ENCODE measurements at regions of chr6 and their contacts with region 1.

Region 1: DNA sequence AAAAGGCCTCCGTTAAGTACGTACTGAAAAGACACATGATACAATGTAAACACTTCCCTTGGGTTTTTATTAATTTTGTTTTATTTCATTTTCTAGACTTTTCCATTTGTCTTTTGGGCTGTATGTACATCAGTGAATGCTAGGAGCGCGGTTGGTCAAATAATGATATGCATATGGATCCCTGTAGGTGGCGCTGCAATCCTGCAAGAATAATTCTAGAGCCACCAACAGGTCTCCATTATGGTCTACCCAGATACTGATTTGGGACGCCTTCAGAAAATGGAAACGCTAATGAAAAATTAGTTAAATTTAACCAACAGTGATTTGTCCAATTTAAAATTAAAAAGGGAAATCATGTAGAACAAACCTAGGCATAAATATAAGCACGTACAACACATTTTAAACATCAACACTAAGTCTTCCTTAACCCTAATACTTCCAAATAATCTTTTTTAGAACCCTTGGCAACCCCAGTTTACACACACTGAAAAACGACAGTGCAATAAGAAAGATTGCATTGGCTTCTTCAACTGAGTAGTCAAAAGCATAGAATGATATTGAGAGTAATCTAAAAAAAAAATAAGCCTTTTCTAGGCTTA is 433.5 kb downstream of the RFPL4B start:
- DNase-seq: peak; percentile 44 to 55
- H3K4me3 ChIP-seq: no peak overlapping the region
- H3K27ac ChIP-seq: no peak overlapping the region
- H3K4me1 ChIP-seq: no peaks in the 10 kb centered on the region
- H3K27me3 ChIP-seq: no peaks in the 10 kb centered on the region
- CTCF ChIP-seq: peak; percentile 82

Region 2: DNA sequence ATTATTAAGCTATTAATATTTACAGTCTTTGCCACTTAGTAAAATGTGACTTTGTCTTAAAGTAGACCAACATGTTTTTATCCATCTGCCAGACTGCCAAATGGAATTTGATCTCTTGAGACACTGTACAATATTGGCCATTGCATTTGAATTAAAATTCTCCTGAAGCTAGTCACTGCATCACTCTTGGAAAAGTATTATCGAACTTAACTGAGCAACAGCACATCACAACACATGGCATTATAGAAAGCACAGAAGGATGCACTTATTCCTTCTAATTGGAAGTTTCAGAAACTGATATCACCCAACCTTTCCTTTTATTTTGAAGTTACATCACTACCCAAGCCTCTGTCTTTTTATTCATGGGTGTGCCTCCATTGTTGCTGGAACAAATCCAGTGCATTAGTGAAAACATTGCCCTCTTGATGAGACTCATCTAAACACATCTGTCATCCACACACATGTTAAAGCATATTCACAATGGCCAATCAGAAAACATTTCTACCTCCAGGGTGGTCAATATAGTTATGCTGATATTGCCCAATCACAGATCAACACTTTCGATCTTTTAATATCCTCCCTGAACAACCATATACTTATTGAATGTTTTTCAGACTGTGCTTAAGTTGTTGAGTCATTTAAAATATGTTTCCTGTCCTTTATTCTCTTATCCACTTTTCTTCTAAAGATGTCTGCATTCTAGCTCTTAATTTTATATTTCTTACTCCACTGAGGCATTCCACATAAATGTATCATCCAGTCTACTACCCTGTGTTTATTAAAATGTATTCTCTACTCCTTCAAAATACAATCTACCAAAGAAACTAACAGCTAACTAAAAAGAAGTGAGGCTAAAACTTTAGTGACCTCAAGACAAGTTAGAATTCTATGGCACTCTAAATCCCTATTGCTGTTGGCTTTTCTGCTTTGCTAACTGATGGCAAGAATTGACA is 101.5 kb after region 1 on chr6:
- CTCF ChIA-PET with region 1: no interaction called
- POLR2A ChIA-PET with region 1: no interaction called
- intact Hi-C with region 1: no loop called
- DNase-seq: no peak
- H3K4me3 ChIP-seq: no peak overlapping the region
- H3K27ac ChIP-seq: no peak overlapping the region
- H3K4me1 ChIP-seq: no peaks in the 10 kb centered on the region
- H3K27me3 ChIP-seq: no peaks in the 10 kb centered on the region
- CTCF ChIP-seq: no peak

Region 3: DNA sequence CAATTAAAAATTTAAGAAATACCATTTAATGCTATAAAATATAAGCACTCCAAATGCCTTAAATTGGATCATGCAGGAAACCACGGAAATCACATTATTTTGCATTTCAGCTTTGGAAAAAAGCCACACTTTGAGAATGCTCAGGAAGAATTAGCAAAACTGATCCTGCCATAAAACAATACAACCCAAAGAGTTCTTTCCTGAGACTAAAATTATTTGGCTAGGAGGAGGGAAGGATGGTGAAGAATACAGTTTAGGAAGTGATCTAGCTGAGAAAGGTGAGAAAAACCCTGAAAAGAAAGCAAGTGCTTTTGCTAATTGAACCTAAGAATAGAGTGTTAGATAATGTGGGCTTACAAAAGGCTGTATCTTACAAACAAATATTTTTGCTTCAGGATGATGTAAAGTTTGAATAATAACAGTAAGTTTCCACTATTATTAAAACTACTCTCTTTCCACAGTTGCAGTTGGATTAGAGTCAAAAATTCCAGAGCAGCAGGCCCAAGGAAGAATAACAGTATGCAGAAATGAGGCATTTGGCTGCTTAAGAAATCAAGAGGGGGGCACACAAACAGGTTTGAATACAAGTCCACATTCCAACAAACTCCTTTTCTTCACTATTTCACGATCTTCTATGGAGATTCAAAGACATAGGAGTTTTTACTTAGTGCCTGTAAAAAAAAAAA is 132.0 kb after region 1 on chr6:
- CTCF ChIA-PET with region 1: no interaction called
- POLR2A ChIA-PET with region 1: no interaction called
- intact Hi-C with region 1: no loop called
- DNase-seq: no peak
- H3K4me3 ChIP-seq: no peak overlapping the region
- H3K27ac ChIP-seq: no peak overlapping the region
- H3K4me1 ChIP-seq: peaks cover 9% of the 10 kb centered on the region
- H3K27me3 ChIP-seq: no peaks in the 10 kb centered on the region
- CTCF ChIP-seq: no peak

Region 4: DNA sequence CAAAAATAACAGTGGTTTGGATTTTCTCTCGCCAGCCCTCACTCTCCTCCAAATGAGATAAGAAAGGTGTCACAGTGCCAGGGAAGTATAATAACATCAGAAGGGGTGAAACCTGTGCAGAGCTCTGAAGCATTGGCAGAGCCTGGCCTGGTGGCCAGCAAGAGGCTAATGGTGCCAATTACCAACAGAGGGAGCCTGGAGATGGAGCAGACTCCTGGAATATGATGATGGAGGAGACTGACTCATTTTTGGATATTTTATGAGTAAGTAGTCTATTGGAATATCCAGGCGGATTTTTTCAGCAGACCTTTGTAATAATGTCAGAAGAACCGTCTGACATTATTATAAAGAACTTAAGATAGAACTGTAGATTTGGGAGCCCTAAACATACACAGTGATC is 633.9 kb after region 1 on chr6:
- CTCF ChIA-PET with region 1: no interaction called
- POLR2A ChIA-PET with region 1: no interaction called
- intact Hi-C with region 1: loop called (anchors 2 kb)
- DNase-seq: peak; percentile 35 to 66
- H3K4me3 ChIP-seq: no peak overlapping the region
- H3K27ac ChIP-seq: no peak overlapping the region
- H3K4me1 ChIP-seq: peaks cover 30% of the 10 kb centered on the region
- H3K27me3 ChIP-seq: no peaks in the 10 kb centered on the region
- CTCF ChIP-seq: peak; percentile 67; the same call in 1 of the 2 replicates

Region 5: GRCh38 chr6:113879186-113880096 is 1098.8 kb after region 1 on chr6:
- CTCF ChIA-PET with region 1: no interaction called
- POLR2A ChIA-PET with region 1: no interaction called
- intact Hi-C with region 1: loop called (anchors 1 kb)
- DNase-seq: peak; percentile 54 to 77
- H3K4me3 ChIP-seq: no peak overlapping the region
- H3K27ac ChIP-seq: peak overlapping the region; percentile 49
- H3K4me1 ChIP-seq: peaks cover 10% of the 10 kb centered on the region
- H3K27me3 ChIP-seq: no peaks in the 10 kb centered on the region
- CTCF ChIP-seq: peak; percentile 85

Region 6: GRCh38 chr6:113909234-113909856 is 1128.7 kb after region 1 on chr6:
- CTCF ChIA-PET with region 1: no interaction called
- POLR2A ChIA-PET with region 1: no interaction called
- intact Hi-C with region 1: loop called (anchors 1 kb)
- DNase-seq: peak; percentile 5 to 57
- H3K4me3 ChIP-seq: no peak overlapping the region
- H3K27ac ChIP-seq: no peak overlapping the region
- H3K4me1 ChIP-seq: 0 out of 2 replicates have a peak, but pooled peaks cover 7% of the 10 kb centered on the region
- H3K27me3 ChIP-seq: no peaks in the 10 kb centered on the region
- CTCF ChIP-seq: peak; percentile 99

Region 7: DNA sequence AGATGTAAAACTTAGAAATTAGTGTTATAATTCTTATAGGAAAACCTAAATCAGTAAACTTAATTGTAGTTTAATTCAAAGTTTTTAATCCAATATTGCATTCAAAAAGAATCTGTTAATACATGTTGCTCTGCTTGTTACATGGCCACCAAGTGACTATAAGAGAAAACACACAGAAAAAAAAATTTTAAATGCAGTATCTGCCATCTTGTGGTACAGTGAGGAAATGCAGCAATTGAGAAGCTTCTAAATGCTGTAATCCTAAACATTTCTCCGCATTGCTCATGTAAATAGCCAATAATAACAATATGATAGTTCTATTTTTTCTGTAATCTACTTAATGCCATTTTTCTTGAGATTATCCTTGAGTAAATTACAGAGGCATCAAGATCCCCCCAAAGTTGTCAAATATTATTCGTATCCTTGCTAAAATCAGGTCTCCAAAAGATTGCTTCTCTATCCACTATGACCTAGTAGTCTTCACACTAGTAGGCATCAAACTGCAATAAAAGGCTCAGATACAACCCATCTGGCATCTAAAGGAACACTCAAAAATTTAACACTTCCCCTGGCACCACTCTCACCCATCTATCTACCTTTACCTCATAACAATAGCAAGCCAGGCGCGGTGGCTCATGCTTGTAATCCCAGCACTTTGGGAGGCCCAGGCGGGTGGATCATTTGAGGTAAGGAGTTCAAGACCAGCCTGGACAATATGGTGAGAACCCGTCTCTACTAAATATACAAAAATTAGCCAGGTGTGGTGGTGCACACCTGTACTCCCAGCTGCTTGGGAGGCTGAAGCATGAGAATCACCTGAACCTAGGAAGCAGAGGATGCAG is 1155.7 kb after region 1 on chr6:
- CTCF ChIA-PET with region 1: no interaction called
- POLR2A ChIA-PET with region 1: no interaction called
- intact Hi-C with region 1: loop called (anchors 1 kb)
- DNase-seq: peak; percentile 7 to 69
- H3K4me3 ChIP-seq: no peak overlapping the region
- H3K27ac ChIP-seq: no peak overlapping the region
- H3K4me1 ChIP-seq: no peaks in the 10 kb centered on the region
- H3K27me3 ChIP-seq: no peaks in the 10 kb centered on the region
- CTCF ChIP-seq: peak; percentile 99

Measured in PC-9 (cell line).